Mammary epithelial cell (primary cell): ENCODE measurements at regions of chr7 and their contacts with region 1.

Region 1: DNA sequence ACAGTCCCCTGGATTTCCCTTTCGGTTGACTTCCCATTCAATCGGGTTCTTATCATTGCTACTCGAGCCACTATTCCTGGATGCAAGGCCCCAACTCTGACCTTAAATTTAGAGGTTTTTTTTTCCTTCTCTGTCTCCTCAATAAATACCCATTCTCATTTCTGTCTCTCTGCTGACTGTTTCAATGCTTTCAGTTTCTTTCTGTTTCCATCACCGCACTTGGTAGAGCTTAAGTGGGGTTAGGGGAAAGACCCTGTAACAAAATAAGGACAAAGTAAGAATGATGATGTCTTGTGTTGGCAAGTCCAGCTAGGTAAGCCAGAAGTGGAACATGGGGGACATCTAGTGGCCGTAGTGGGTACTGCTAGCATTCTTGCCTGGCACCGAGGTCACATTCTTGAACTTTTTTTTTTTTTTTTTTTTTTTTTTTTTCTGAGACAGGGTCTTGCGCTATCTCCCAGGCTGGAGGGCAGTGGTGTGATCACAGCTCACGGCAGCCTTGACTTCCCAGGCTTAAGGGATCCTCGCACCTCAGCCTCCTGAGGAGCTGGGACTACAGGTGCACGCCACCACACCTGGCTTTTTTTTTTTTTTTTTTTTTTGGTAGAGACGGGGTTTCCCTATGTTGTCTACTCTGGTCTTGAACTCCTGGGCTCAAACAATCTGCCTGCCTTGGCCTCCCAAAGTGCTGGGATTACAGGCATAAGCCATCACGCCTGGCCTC is 40.3 kb downstream of the ZC3HC1 start:
- DNase-seq: peak; percentile 77
- H3K4me3 ChIP-seq: no peak overlapping the region
- H3K27ac ChIP-seq: peak overlapping the region; percentile 93
- H3K4me1 ChIP-seq: peaks cover 25% of the 10 kb centered on the region
- H3K27me3 ChIP-seq: no peaks in the 10 kb centered on the region
- CTCF ChIP-seq: peak; percentile 94 to 96

Region 2: GRCh38 chr7:129224251-129225205 is 786.3 kb before region 1 on chr7 and contains the start of gene AHCYL2:
- CTCF ChIA-PET with region 1: no interaction called
- dilution Hi-C with region 1: no loop called
- in situ Hi-C with region 1: no loop called
- intact Hi-C with region 1: loop called (anchors 2 kb)
- DNase-seq: peak; percentile 98
- H3K4me3 ChIP-seq: peak within 1 kb of the TSS; percentile 75 to 82 (median 78)
- H3K27ac ChIP-seq: peak within 1 kb of the TSS; percentile 77
- H3K4me1 ChIP-seq: peaks cover 15% of the 10 kb centered on the region
- H3K27me3 ChIP-seq: no peaks in the 10 kb centered on the region
- CTCF ChIP-seq: no peak
- total RNA-seq, gene AHCYL2: 19.3 to 26.6 TPM

Region 3: DNA sequence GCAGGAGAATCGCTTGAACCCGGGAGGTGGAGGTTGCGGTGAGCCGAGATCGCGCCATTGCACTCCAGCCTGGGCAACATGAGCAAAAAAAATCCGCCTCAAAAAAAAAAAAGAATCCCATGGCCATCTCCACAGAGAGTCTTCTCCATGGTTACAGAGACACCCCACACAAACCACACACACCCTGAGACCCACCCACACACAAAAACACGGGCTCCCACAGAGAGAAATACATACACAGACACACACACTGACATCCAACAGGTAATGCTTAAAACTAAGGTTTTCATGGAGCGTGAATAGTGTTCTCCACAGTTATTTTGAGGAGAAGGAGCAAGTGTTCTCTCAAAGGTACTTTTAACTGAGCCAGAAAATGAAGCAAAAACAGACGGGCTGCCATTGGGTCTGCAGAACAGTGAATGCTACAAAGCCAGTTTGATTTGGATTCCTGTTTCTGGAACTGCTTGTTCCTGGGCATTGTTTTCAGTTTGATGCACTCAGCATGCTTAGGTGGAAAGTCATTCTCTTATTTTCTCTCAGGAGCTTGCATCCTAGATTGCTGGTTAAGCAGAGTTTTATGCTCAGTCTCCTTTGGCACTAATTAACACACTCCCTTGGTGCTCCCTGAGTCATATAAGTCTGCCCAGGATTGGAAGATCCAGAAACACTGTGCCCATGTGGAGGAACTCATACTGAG is 770.6 kb before region 1 on chr7:
- CTCF ChIA-PET with region 1: no interaction called
- dilution Hi-C with region 1: no loop called
- in situ Hi-C with region 1: no loop called
- intact Hi-C with region 1: no loop called
- DNase-seq: peak; percentile 16
- H3K4me3 ChIP-seq: no peak overlapping the region
- H3K27ac ChIP-seq: no peak overlapping the region
- H3K4me1 ChIP-seq: no peaks in the 10 kb centered on the region
- H3K27me3 ChIP-seq: no peaks in the 10 kb centered on the region
- CTCF ChIP-seq: no peak

Region 4: GRCh38 chr7:129652914-129653313 is 357.9 kb before region 1 on chr7:
- CTCF ChIA-PET with region 1: no interaction called
- dilution Hi-C with region 1: no loop called
- in situ Hi-C with region 1: loop called in 1 of 2 experiments (anchors 10 kb)
- intact Hi-C with region 1: no loop called
- DNase-seq: no peak
- H3K4me3 ChIP-seq: no peak overlapping the region
- H3K27ac ChIP-seq: no peak overlapping the region
- H3K4me1 ChIP-seq: peaks cover 13% of the 10 kb centered on the region
- H3K27me3 ChIP-seq: no peaks in the 10 kb centered on the region
- CTCF ChIP-seq: no peak

Region 5: GRCh38 chr7:129780257-129780973 is 230.4 kb before region 1 on chr7:
- CTCF ChIA-PET with region 1: interaction called, 7 read pairs
- dilution Hi-C with region 1: no loop called
- in situ Hi-C with region 1: no loop called
- intact Hi-C with region 1: loop called (anchors 1 kb)
- DNase-seq: peak; percentile 90
- H3K4me3 ChIP-seq: peak overlapping the region; percentile 45 to 97 (median 70)
- H3K27ac ChIP-seq: peak overlapping the region; percentile 33
- H3K4me1 ChIP-seq: peaks cover 8% of the 10 kb centered on the region
- H3K27me3 ChIP-seq: peaks cover 33% of the 10 kb centered on the region
- CTCF ChIP-seq: no peak

Region 6: DNA sequence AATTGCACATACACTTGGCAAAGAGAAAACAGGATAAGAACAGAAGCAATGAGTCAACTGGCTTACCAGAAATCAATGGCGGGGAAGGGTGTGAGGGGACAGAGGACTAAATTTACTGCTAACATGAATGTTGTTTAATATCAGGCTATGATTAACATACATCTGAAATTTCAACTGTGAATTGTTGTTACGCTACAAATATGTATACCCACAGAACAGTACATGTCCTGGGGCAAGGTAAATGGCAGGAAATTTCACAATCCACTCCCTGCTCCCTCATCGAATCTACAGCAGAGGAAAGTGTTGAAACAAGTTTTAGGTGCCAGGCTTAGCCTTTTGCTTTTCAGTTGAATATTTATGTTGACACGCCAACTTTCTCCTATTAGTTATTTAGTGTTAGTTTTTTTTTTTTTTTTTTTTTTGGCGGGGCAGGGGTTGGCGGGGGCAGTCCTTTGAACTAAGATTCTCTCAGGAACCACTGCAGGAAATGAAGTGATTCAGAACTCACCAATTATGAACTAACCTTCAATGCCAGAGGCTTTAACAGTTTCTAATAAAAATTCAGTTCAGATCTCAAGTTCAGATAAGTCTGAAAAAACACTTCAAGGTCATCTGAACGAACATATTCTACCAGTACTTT is 157.1 kb before region 1 on chr7:
- CTCF ChIA-PET with region 1: no interaction called
- dilution Hi-C with region 1: no loop called
- in situ Hi-C with region 1: loop called in 1 of 2 experiments (anchors 25 kb)
- intact Hi-C with region 1: loop called (anchors 1 kb)
- DNase-seq: peak; percentile 92
- H3K4me3 ChIP-seq: peak overlapping the region in 1 of 3 experiments; percentile 8
- H3K27ac ChIP-seq: peak overlapping the region; percentile 79
- H3K4me1 ChIP-seq: peaks cover 30% of the 10 kb centered on the region
- H3K27me3 ChIP-seq: no peaks in the 10 kb centered on the region
- CTCF ChIP-seq: no peak

Region 7: GRCh38 chr7:129958643-129959470 is 52.0 kb before region 1 on chr7:
- CTCF ChIA-PET with region 1: interaction called, 14 read pairs
- dilution Hi-C with region 1: loop called (anchors 5 kb)
- in situ Hi-C with region 1: loop called (anchors 5 to 10 kb)
- intact Hi-C with region 1: no loop called
- DNase-seq: peak; percentile 99
- H3K4me3 ChIP-seq: no peak overlapping the region
- H3K27ac ChIP-seq: peak overlapping the region; percentile 92
- H3K4me1 ChIP-seq: peaks cover 30% of the 10 kb centered on the region
- H3K27me3 ChIP-seq: no peaks in the 10 kb centered on the region
- CTCF ChIP-seq: peak in 1 of 2 donors; percentile 7